CD4-positive, alpha-beta T cell (primary cell): ENCODE measurements at regions of chr6 and their contacts with region 1.

Region 1: DNA sequence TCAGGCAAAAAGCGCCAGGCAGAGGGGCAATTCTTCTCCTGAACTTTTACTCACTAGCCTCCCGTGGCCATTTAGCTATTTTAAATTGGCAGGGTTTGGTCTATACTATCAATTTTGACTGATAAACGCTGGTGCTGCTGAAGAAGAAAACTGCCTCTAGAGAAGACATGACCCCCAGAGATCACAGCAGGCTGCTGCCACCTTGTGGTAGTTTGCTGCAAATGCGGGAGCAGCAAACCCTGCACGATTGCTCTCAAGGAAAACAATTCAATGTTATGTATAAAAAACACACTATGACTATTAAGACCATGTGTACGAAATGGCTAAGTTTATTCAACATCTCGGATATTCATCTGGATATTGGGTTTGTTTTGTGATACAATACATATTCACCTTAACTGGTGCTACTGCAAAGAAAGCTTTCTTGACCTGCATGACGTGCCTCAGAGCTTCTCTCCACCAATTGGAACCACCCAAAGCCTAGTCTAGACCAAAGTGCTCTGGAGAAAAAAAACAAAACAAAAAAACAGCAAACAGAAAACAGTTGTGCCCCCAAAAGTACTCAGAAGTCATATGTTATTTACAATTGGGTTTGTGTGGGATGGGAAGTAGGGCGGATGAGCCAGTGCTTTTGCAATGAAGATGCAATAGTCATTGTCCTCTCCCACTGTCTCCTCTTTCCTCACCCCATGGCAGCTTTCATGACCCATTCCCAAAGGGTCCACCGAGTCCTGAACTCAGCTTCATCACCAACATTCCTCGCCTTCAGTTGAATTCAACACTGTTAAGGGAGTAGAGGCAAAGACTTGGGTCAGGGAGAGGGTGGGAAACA is 19.6 kb upstream of the IL17F start:
- DNase-seq: peak; percentile 45 to 81 (median 60)
- ATAC-seq: peak; percentile 89
- H3K4me3 ChIP-seq: no peak overlapping the region
- H3K4me3 Mint-ChIP-seq: no peak overlapping the region
- H3K27ac ChIP-seq: no peak overlapping the region
- H3K27ac Mint-ChIP-seq: peak overlapping the region; percentile 42
- H3K4me1 ChIP-seq: no peaks in the 10 kb centered on the region
- H3K4me1 Mint-ChIP-seq: peaks cover 15% of the 10 kb centered on the region
- H3K27me3 ChIP-seq: no peaks in the 10 kb centered on the region
- H3K27me3 Mint-ChIP-seq: no peaks in the 10 kb centered on the region
- CTCF ChIP-seq: peak; percentile 98

Region 2: GRCh38 chr6:51855310-51856082 is 408.4 kb before region 1 on chr6:
- CTCF ChIA-PET with region 1: no interaction called
- POLR2A ChIA-PET with region 1: no interaction called
- intact Hi-C with region 1: loop called in 1 of 2 experiments (anchors 5 kb)
- DNase-seq: peak in 3 of 14 experiments; percentile 34 to 57 (median 51)
- ATAC-seq: no peak
- H3K4me3 ChIP-seq: no peak overlapping the region
- H3K4me3 Mint-ChIP-seq: no peak overlapping the region
- H3K27ac ChIP-seq: no peak overlapping the region
- H3K27ac Mint-ChIP-seq: no peak overlapping the region
- H3K4me1 ChIP-seq: no peaks in the 10 kb centered on the region
- H3K4me1 Mint-ChIP-seq: no peaks in the 10 kb centered on the region
- H3K27me3 ChIP-seq: peaks cover 0 to 2% of the 10 kb centered on the region in 2 experiments
- H3K27me3 Mint-ChIP-seq: peaks cover 14% of the 10 kb centered on the region
- CTCF ChIP-seq: peak; percentile 57

Region 3: GRCh38 chr6:52063584-52064344 is 200.2 kb before region 1 on chr6:
- CTCF ChIA-PET with region 1: no interaction called
- POLR2A ChIA-PET with region 1: no interaction called
- intact Hi-C with region 1: loop called (anchors 2 kb)
- DNase-seq: peak; percentile 12 to 76 (median 38)
- ATAC-seq: peak; percentile 90
- H3K4me3 ChIP-seq: peak overlapping the region; percentile 26
- H3K4me3 Mint-ChIP-seq: peak overlapping the region; percentile 64
- H3K27ac ChIP-seq: peak overlapping the region in 1 of 2 donors; percentile 21
- H3K27ac Mint-ChIP-seq: peak overlapping the region; percentile 24
- H3K4me1 ChIP-seq: peaks cover 11% of the 10 kb centered on the region
- H3K4me1 Mint-ChIP-seq: peaks cover 14% of the 10 kb centered on the region
- H3K27me3 ChIP-seq: no peaks in the 10 kb centered on the region
- H3K27me3 Mint-ChIP-seq: no peaks in the 10 kb centered on the region
- CTCF ChIP-seq: peak; percentile 55

Region 4: GRCh38 chr6:52098634-52099185 is 165.2 kb before region 1 on chr6:
- CTCF ChIA-PET with region 1: no interaction called
- POLR2A ChIA-PET with region 1: no interaction called
- intact Hi-C with region 1: loop called in 1 of 2 experiments (anchors 2 kb)
- DNase-seq: no peak
- ATAC-seq: no peak
- H3K4me3 ChIP-seq: no peak overlapping the region
- H3K4me3 Mint-ChIP-seq: no peak overlapping the region
- H3K27ac ChIP-seq: no peak overlapping the region
- H3K27ac Mint-ChIP-seq: no peak overlapping the region
- H3K4me1 ChIP-seq: no peaks in the 10 kb centered on the region
- H3K4me1 Mint-ChIP-seq: no peaks in the 10 kb centered on the region
- H3K27me3 ChIP-seq: peaks cover 3 to 10% of the 10 kb centered on the region in 2 experiments
- H3K27me3 Mint-ChIP-seq: peaks cover 46% of the 10 kb centered on the region
- CTCF ChIP-seq: no peak

Region 5: DNA sequence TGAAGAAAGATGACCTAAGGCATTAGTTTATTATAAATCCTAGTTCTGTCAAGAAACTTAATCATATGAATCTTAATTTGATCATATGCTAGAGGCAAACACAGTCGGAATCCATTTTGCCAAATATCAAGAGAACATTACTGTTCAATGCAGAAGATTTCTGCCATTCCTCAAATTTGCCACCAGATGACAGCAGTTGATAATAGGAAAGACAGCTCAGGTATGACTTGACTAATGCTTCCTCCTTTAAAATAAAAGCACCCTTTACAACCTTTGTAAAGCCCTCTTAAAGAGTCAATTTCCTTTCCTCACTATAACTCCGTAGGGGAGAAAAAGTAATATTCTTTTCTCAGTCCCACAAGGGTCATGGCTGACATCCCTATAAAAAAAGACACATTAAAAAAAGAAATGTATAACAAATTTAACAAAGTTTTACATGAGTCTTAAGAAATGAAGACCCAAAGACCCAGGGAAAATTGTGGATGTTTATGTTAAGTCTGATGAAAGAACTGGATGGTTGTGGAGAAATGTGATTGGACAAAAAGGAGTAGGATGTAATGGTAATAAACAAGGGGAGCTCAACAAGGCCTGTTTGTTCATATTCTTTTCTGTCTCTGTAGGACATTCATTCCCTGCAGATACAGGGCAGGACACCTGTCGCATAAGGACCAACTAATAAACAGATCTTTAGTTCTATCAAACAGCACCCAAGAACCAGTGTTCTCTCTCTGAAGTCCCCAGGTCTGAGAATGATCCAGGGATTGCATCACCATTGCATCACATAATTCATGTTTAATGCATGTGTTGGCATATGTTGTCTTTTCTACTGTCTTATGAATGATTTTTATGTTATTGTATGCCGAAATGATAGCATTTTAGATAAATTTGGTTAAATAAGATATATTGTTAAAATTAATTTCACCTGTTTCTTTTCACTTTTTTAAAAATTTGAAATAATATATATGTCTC is 100.7 kb before region 1 on chr6:
- CTCF ChIA-PET with region 1: no interaction called
- POLR2A ChIA-PET with region 1: interaction called, 3 read pairs
- intact Hi-C with region 1: loop called (anchors 1 kb)
- DNase-seq: peak in 3 of 14 experiments; percentile 50 to 62 (median 60)
- ATAC-seq: peak; percentile 59
- H3K4me3 ChIP-seq: no peak overlapping the region
- H3K4me3 Mint-ChIP-seq: no peak overlapping the region
- H3K27ac ChIP-seq: no peak overlapping the region
- H3K27ac Mint-ChIP-seq: no peak overlapping the region
- H3K4me1 ChIP-seq: no peaks in the 10 kb centered on the region
- H3K4me1 Mint-ChIP-seq: no peaks in the 10 kb centered on the region
- H3K27me3 ChIP-seq: peaks cover 0 to 3% of the 10 kb centered on the region in 2 experiments
- H3K27me3 Mint-ChIP-seq: peaks cover 9% of the 10 kb centered on the region
- CTCF ChIP-seq: peak; percentile 58

Region 6: DNA sequence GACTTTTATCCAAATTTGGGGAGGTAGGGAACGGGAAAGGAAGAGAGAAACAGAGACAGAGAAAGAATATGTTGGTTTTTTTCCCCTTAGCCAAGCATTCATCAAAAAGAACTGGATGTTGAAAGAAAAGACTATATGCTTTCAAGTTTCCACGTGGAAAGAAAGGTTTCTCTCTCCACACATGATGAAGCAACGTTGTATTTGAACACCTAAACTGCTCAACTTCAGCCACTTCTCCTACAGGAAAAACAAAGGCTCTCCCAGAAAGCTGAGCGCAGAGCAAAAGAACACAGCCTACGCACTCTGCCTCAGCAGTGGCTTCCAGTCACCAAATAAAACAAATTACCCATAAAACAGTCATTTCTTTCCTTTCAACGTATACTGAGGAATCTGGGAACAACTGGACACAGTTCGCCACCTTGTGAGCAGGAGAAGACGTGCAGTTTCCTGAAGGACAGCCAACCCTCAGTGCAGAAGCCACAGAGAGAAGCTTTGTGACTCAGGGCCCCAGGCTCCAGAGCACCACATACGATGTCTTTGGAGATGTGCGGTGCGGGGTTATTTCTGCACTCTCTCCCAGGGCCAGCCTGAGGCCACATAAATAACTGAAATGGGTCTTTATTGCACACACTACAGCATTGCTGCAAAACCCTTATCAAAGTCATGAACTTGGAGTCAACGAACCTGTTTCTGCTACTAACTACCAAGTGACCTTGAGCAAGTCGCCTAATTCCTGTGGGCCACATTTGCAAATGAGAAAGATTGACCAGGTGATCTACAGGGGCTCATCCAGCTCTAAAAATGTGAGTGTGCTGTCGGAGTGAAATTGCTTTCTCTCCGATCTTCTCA is 29.7 kb before region 1 on chr6:
- CTCF ChIA-PET with region 1: no interaction called
- POLR2A ChIA-PET with region 1: no interaction called
- intact Hi-C with region 1: no loop called
- DNase-seq: no peak
- ATAC-seq: no peak
- H3K4me3 ChIP-seq: no peak overlapping the region
- H3K4me3 Mint-ChIP-seq: no peak overlapping the region
- H3K27ac ChIP-seq: no peak overlapping the region
- H3K27ac Mint-ChIP-seq: no peak overlapping the region
- H3K4me1 ChIP-seq: peaks cover 3% of the 10 kb centered on the region
- H3K4me1 Mint-ChIP-seq: no peaks in the 10 kb centered on the region
- H3K27me3 ChIP-seq: no peaks in the 10 kb centered on the region
- H3K27me3 Mint-ChIP-seq: peaks cover 3% of the 10 kb centered on the region
- CTCF ChIP-seq: no peak